ENCODE measurements at regions of chr10 and their contacts with region 1.

Region 1: GRCh38 chr10:48656241-48656913 is 28.3 kb upstream of the WDFY4 start:
- DNase-seq: peak; percentile 78
- H3K4me3 ChIP-seq: peak overlapping the region; percentile 64
- H3K27ac ChIP-seq: peak overlapping the region; percentile 11
- H3K27me3 ChIP-seq: peaks cover 3% of the 10 kb centered on the region
- CTCF ChIP-seq: peak; percentile 83

Region 2: GRCh38 chr10:48369555-48369954 is 286.8 kb before region 1 on chr10:
- CTCF ChIA-PET with region 1: interaction called, 117 read pairs
- POLR2A ChIA-PET with region 1: no interaction called
- DNase-seq: no peak
- H3K4me3 ChIP-seq: no peak overlapping the region
- H3K27ac ChIP-seq: no peak overlapping the region
- H3K27me3 ChIP-seq: no peaks in the 10 kb centered on the region
- CTCF ChIP-seq: no peak

Region 3: DNA sequence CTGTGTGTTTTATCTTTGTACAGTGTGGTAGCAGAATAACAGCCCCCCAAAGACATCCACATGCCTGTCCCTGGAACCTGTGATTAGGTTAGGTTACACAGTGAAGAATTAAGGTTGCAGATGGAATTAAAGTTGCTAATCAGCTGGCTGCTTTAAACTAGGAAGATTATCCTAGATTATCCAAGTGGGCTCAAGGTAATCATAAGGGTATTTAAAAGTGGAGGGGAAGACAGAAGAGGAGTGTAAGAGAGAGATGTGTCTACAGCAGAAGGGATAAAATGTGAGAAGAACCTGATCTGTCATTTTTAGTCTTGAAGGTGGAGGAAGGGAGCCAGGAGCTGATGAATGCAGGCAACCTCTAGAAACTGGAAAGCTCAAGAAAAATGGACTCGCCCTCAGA is 169.1 kb before region 1 on chr10:
- CTCF ChIA-PET with region 1: interaction called, 11 read pairs
- POLR2A ChIA-PET with region 1: no interaction called
- DNase-seq: no peak
- H3K4me3 ChIP-seq: no peak overlapping the region
- H3K27ac ChIP-seq: no peak overlapping the region
- H3K27me3 ChIP-seq: no peaks in the 10 kb centered on the region
- CTCF ChIP-seq: no peak

Region 4: DNA sequence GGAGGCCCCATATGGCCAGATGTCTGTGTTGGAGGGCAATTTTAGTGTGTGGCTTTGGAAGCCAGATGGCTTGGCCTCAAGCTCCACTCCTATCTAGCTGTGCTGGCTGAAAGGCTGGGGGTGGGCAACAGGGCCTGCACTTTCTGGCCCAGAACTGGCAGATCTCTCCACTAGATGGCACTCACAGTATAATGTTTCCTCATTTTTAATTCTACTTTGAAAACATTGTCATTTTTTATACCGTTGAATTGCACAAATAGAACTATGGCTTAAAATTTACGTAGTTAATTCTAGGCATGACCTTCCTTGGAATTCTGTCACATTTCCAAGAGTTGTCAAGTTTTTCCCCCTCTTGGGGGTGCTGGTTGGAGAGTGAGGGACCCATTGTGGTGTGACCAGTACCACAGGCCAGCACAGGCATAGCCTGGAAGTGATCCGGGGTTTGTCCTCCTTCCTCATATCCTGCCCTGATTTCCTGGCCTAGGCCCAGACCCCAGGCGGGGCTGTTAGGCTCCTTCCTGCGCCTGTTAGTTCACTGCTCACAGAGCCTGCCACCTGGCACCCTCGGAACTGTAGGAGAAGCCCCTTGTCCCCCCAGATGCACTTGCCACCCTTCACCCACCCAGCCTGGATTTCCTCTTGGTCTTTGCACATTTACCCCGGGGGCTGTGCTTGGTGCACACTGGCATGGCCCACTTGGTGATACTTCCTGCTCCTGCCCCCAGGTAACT is 104.4 kb before region 1 on chr10:
- CTCF ChIA-PET with region 1: interaction called, 668 read pairs
- POLR2A ChIA-PET with region 1: interaction called, 6 read pairs
- DNase-seq: peak; percentile 29
- H3K4me3 ChIP-seq: no peak overlapping the region
- H3K27ac ChIP-seq: no peak overlapping the region
- H3K27me3 ChIP-seq: no peaks in the 10 kb centered on the region
- CTCF ChIP-seq: peak; percentile 74

Region 5: GRCh38 chr10:48623607-48624132 is 32.7 kb before region 1 on chr10:
- CTCF ChIA-PET with region 1: interaction called, 141 read pairs
- POLR2A ChIA-PET with region 1: interaction called, 3 read pairs
- DNase-seq: no peak
- H3K4me3 ChIP-seq: no peak overlapping the region
- H3K27ac ChIP-seq: no peak overlapping the region
- H3K27me3 ChIP-seq: no peaks in the 10 kb centered on the region
- CTCF ChIP-seq: no peak

Region 6: GRCh38 chr10:48714088-48714487 is 57.7 kb after region 1 on chr10:
- CTCF ChIA-PET with region 1: no interaction called
- POLR2A ChIA-PET with region 1: no interaction called
- DNase-seq: no peak
- H3K4me3 ChIP-seq: no peak overlapping the region
- H3K27ac ChIP-seq: no peak overlapping the region
- H3K27me3 ChIP-seq: peaks cover 6% of the 10 kb centered on the region
- CTCF ChIP-seq: no peak

Region 7: GRCh38 chr10:49407552-49408137 is 751.3 kb after region 1 on chr10:
- CTCF ChIA-PET with region 1: interaction called, 20 read pairs
- POLR2A ChIA-PET with region 1: no interaction called
- DNase-seq: peak; percentile 21
- H3K4me3 ChIP-seq: no peak overlapping the region
- H3K27ac ChIP-seq: no peak overlapping the region
- H3K27me3 ChIP-seq: peaks cover 20% of the 10 kb centered on the region
- CTCF ChIP-seq: peak; percentile 94

Region 8: GRCh38 chr10:49538381-49539319 is 882.3 kb after region 1 on chr10 and contains the start of gene ERCC6:
- CTCF ChIA-PET with region 1: interaction called, 12 read pairs
- POLR2A ChIA-PET with region 1: no interaction called
- DNase-seq: peak; percentile 95
- H3K4me3 ChIP-seq: peak within 1 kb of the TSS; percentile 79
- H3K27ac ChIP-seq: peak within 1 kb of the TSS; percentile 78
- H3K27me3 ChIP-seq: no peaks in the 10 kb centered on the region
- CTCF ChIP-seq: no peak
- polyA plus RNA-seq, gene ERCC6: 9.5 and 9.8 TPM in 2 replicates